OCI-LY7 (cell line): ENCODE measurements at regions of chr21 and their contacts with region 1.

Region 1: DNA sequence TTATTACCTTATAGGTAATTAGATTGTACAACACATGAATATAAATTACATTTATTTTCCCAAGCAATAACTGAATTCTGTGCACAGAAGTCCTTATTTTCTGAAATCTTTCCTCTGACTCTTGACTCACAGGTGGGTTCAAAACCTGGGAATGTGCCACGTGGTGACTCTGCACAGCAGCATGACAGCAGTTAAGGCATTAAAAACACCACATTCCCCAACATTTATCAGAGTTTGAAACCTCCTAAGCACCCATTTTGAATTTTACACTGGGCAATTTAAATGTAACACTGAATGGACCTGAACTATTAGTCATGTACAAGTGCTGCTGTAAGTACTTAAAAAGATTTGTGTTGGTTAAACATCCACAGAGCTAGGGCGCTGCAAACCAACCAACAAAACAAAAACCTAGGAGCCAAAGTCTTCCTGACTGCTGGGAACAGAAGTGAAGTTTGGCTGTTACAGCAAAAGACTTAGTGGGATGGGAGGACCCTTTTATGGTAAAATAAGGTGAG is 480.6 kb upstream of the CXADR start:
- DNase-seq: no peak
- H3K4me3 ChIP-seq: no peak overlapping the region
- H3K27ac ChIP-seq: no peak overlapping the region
- H3K4me1 ChIP-seq: no peaks in the 10 kb centered on the region
- CTCF ChIP-seq: no peak

Region 2: GRCh38 chr21:17044696-17045095 is 12.5 kb after region 1 on chr21:
- CTCF ChIA-PET with region 1: no interaction called
- POLR2A ChIA-PET with region 1: interaction called, 13 read pairs
- intact Hi-C with region 1: no loop called
- DNase-seq: no peak
- H3K4me3 ChIP-seq: no peak overlapping the region
- H3K27ac ChIP-seq: no peak overlapping the region
- H3K4me1 ChIP-seq: no peaks in the 10 kb centered on the region
- CTCF ChIP-seq: no peak